HepG2 (cell line): ENCODE measurements at regions of chr20 and their contacts with region 1.

Region 1: GRCh38 chr20:16476032-16476431 is 97.2 kb downstream of the KIF16B start:
- DNase-seq: peak; percentile 76
- ATAC-seq: peak; percentile 71
- H3K4me3 ChIP-seq: peak overlapping the region in 2 of 3 experiments; percentile 5 to 6; a peak in 2 of 6 replicates
- H3K27ac ChIP-seq: peak overlapping the region; percentile 71
- H3K4me1 ChIP-seq: peaks cover 58% of the 10 kb centered on the region
- H3K27me3 ChIP-seq: no peaks in the 10 kb centered on the region
- CTCF ChIP-seq: peak; percentile 83
- EP300 ChIP-seq: no peak
- POLR2A ChIP-seq: no peak
- RAD21 ChIP-seq: peak; percentile 83

Region 2: DNA sequence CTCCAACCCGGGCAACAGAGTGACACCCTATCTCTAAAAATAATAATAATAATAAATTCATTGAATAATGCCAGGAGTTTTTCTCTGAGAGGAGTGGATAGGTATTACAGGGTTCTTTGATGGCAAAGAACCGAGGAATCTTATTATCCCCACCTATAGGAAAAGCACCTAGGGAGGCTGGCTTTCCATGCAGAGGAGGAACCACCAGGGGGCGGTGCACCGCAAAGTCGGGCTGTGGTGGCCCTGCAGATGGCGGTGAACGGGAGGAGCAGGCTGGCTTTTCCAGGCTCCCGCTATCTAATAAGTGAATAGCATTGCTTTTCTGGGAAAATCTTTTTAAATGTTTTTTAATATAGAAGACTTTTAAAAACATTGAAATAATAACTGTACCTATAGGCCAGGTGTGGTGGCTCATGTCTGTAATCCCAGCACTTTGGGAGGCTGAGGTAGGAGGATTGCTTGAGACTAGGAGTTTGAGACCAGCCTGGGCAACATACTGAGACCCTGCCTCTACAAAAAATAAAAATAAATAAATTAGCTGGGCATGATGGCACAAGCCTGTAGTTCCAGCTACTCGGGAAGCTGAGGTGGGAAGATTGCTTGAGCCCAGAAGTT is 766.9 kb before region 1 on chr20:
- CTCF ChIA-PET with region 1: interaction called, 41 read pairs
- POLR2A ChIA-PET with region 1: no interaction called
- in situ Hi-C with region 1: loop called (anchors 10 kb)
- intact Hi-C with region 1: loop called (anchors 1 kb)
- DNase-seq: peak; percentile 52
- ATAC-seq: peak; percentile 99
- H3K4me3 ChIP-seq: no peak overlapping the region
- H3K27ac ChIP-seq: no peak overlapping the region
- H3K4me1 ChIP-seq: no peaks in the 10 kb centered on the region
- H3K27me3 ChIP-seq: no peaks in the 10 kb centered on the region
- CTCF ChIP-seq: peak; percentile 83
- EP300 ChIP-seq: no peak
- POLR2A ChIP-seq: no peak
- RAD21 ChIP-seq: peak; percentile 76

Region 3: DNA sequence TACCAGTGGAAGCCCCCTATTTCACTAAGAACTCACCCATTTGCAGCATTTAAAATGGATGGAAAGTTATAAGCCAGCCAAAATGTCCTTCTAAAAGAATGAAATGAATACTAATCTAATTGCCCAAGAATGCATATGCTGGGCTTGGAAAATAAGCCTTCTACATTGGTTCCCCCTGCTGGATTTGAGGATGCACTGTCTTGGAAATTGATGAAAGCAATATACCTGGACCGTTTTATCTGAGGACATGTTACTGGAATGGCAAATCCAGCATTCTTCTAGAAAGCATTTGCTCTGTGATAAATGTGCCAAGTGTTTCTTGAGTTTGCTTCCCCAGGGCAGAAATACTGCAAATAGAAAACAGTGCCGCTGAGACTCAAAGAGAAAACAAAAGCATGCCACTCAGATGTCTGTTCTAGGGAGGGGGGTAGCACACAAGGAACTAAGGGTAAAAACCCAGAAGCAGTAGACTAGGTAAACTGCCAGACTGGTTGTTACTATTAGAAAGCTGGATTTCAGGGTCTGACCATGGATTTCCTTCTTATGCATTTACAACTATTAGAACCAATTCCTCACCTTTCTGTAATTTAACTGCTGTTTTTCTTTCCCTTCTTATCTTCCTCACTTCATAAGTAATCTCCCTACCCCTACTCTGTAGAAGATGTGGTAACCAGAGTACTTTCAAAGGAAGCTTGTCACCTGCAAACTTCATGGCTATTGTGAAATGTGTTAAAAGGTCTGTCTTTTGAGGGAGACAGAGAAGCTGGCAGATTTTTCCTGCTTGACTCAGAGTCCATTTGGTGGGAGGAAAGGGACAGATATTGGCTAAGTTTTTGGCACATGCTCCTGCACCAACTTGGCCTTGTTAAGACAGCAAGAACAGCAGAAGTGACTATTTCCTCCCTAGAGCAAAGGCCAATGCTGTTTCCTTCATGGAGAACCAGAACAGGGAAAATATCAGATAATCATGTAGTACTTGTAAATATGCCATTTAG is 545.4 kb before region 1 on chr20:
- CTCF ChIA-PET with region 1: no interaction called
- POLR2A ChIA-PET with region 1: no interaction called
- in situ Hi-C with region 1: no loop called
- intact Hi-C with region 1: loop called (anchors 1 kb)
- DNase-seq: peak; percentile 28
- ATAC-seq: peak; percentile 80
- H3K4me3 ChIP-seq: no peak overlapping the region
- H3K27ac ChIP-seq: no peak overlapping the region
- H3K4me1 ChIP-seq: no peaks in the 10 kb centered on the region
- H3K27me3 ChIP-seq: no peaks in the 10 kb centered on the region
- CTCF ChIP-seq: peak; percentile 42
- EP300 ChIP-seq: no peak
- POLR2A ChIP-seq: no peak
- RAD21 ChIP-seq: no peak

Region 4: GRCh38 chr20:16241915-16242314 is 234.1 kb before region 1 on chr20:
- CTCF ChIA-PET with region 1: no interaction called
- POLR2A ChIA-PET with region 1: no interaction called
- in situ Hi-C with region 1: loop called (anchors 10 kb)
- intact Hi-C with region 1: loop called (anchors 2 kb)
- DNase-seq: peak; percentile 72
- ATAC-seq: peak; percentile 87
- H3K4me3 ChIP-seq: no peak overlapping the region
- H3K27ac ChIP-seq: no peak overlapping the region
- H3K4me1 ChIP-seq: 0 out of 2 replicates have a peak, but pooled peaks cover 4% of the 10 kb centered on the region
- H3K27me3 ChIP-seq: no peaks in the 10 kb centered on the region
- CTCF ChIP-seq: peak; percentile 82
- EP300 ChIP-seq: no peak
- POLR2A ChIP-seq: no peak
- RAD21 ChIP-seq: no peak

Region 5: GRCh38 chr20:16434062-16434664 is 41.9 kb before region 1 on chr20:
- CTCF ChIA-PET with region 1: no interaction called
- POLR2A ChIA-PET with region 1: no interaction called
- in situ Hi-C with region 1: no loop called
- intact Hi-C with region 1: loop called (anchors 1 kb)
- DNase-seq: peak; percentile 75
- ATAC-seq: peak; percentile 98
- H3K4me3 ChIP-seq: no peak overlapping the region
- H3K27ac ChIP-seq: no peak overlapping the region
- H3K4me1 ChIP-seq: no peaks in the 10 kb centered on the region
- H3K27me3 ChIP-seq: no peaks in the 10 kb centered on the region
- CTCF ChIP-seq: peak; percentile 81
- EP300 ChIP-seq: no peak
- POLR2A ChIP-seq: no peak
- RAD21 ChIP-seq: peak; percentile 50

Region 6: DNA sequence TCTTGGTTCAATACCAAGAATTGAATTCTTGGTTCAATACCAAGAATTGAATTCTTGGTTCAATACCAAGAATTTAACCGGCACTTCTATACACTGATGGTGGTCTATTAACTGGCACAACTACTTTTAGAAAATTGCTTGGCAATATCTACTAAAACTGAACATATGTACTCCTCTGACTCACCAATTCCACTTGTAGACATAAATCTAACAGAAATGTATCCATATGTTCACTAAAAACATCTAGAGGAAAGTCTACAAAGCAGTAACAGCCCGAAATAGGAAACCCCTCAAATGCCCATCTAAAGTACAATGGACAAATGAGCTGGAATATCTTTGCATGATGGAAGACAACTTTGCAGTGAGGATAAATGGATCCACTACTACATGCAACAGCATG is 25.3 kb after region 1 on chr20:
- CTCF ChIA-PET with region 1: no interaction called
- POLR2A ChIA-PET with region 1: no interaction called
- in situ Hi-C with region 1: no loop called
- intact Hi-C with region 1: no loop called
- DNase-seq: no peak
- ATAC-seq: no peak
- H3K4me3 ChIP-seq: no peak overlapping the region
- H3K27ac ChIP-seq: no peak overlapping the region
- H3K4me1 ChIP-seq: no peaks in the 10 kb centered on the region
- H3K27me3 ChIP-seq: no peaks in the 10 kb centered on the region
- CTCF ChIP-seq: no peak
- EP300 ChIP-seq: no peak
- POLR2A ChIP-seq: no peak
- RAD21 ChIP-seq: no peak

Region 7: DNA sequence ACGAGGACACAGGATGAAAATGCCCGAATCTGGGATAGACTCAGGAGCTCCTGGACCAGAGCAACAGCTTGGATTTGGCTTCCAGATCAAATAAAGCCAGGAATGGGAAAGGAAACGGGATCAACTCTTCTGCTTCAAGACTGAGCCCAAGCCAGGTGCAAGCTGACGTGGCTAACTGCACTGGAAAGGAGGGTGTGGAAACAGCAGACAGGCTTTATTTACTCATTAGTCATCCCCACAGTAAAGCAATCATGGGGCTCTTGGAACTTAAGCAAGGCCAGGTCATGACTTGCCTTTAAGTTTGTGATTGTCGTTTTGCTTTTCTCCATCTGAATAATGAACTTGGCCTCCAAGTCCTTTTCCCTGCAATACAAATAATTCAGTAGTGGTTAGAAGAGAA is 52.0 kb after region 1 on chr20:
- CTCF ChIA-PET with region 1: no interaction called
- POLR2A ChIA-PET with region 1: no interaction called
- in situ Hi-C with region 1: no loop called
- intact Hi-C with region 1: no loop called
- DNase-seq: peak; percentile 80
- ATAC-seq: peak; percentile 98
- H3K4me3 ChIP-seq: no peak overlapping the region
- H3K27ac ChIP-seq: peak overlapping the region; percentile 8
- H3K4me1 ChIP-seq: peaks cover 20% of the 10 kb centered on the region
- H3K27me3 ChIP-seq: no peaks in the 10 kb centered on the region
- CTCF ChIP-seq: no peak
- EP300 ChIP-seq: peak in 1 of 2 experiments; percentile 33; a peak in 1 of 4 replicates
- POLR2A ChIP-seq: no peak
- RAD21 ChIP-seq: no peak